Gastrocnemius medialis (tissue), 4 donors: ENCODE measurements at regions of chr12 and their contacts with region 1.

Region 1: GRCh38 chr12:26204612-26205289 is 9.4 kb downstream of the SSPN start:
- DNase-seq: no peak
- ATAC-seq: peak in 1 of 2 donors; percentile 44
- H3K4me3 ChIP-seq: no peak overlapping the region
- H3K27ac ChIP-seq: no peak overlapping the region
- H3K4me1 ChIP-seq: peaks cover 17 to 29% of the 10 kb centered on the region in 2 donors
- H3K27me3 ChIP-seq: no peaks in the 10 kb centered on the region
- CTCF ChIP-seq: no peak
- POLR2A ChIP-seq: no peak

Region 2: GRCh38 chr12:26028953-26029735 is 175.6 kb before region 1 on chr12:
- in situ Hi-C with region 1: no loop called
- intact Hi-C with region 1: no loop called
- DNase-seq: no peak
- ATAC-seq: peak; percentile 70 to 76
- H3K4me3 ChIP-seq: no peak overlapping the region
- H3K27ac ChIP-seq: peak overlapping the region in 1 of 4 donors; percentile 27
- H3K4me1 ChIP-seq: peaks cover 23 to 39% of the 10 kb centered on the region in 2 donors
- H3K27me3 ChIP-seq: no peaks in the 10 kb centered on the region
- CTCF ChIP-seq: peak; percentile 62 to 87 (median 68)
- POLR2A ChIP-seq: no peak

Region 3: GRCh38 chr12:26274441-26275312 is 69.9 kb after region 1 on chr12:
- in situ Hi-C with region 1: no loop called
- intact Hi-C with region 1: loop called (anchors 2 kb)
- DNase-seq: peak; percentile 57 to 76
- ATAC-seq: peak; percentile 85 to 87
- H3K4me3 ChIP-seq: no peak overlapping the region
- H3K27ac ChIP-seq: peak overlapping the region; percentile 61 to 70 (median 68)
- H3K4me1 ChIP-seq: peaks cover 21 to 27% of the 10 kb centered on the region in 2 donors
- H3K27me3 ChIP-seq: no peaks in the 10 kb centered on the region
- CTCF ChIP-seq: no peak
- POLR2A ChIP-seq: peak; percentile 1 to 9